Mammary epithelial cell (primary cell): ENCODE measurements at regions of chr4 and their contacts with region 1.

Region 1: DNA sequence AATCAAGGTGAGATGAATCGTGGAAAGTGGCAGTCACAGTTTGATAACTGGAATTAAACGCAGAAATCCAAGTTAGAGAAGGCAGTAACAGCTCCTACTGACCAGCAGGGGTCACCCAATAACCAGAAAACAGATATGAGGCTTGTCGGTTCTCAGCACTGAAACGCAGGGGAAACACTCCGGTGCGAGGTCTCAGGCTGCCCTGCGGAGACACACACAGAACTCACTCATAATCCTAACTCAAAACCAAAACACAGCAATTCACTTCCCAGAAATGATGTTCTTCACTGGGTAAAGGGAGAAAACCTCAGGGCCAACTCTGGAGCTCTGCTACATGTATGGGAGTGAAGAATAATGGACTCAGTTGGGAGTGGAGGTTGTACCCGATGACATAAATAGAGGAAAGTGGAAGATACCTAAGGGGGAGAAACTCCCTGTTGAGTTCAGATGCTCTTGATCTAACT is 384.4 kb downstream of the RAPGEF2 start:
- DNase-seq: peak; percentile 61
- H3K4me3 ChIP-seq: no peak overlapping the region
- H3K27ac ChIP-seq: no peak overlapping the region
- H3K4me1 ChIP-seq: no peaks in the 10 kb centered on the region
- H3K27me3 ChIP-seq: no peaks in the 10 kb centered on the region
- CTCF ChIP-seq: peak; percentile 80 to 82

Region 2: GRCh38 chr4:159655547-159655946 is 168.2 kb after region 1 on chr4:
- CTCF ChIA-PET with region 1: no interaction called
- dilution Hi-C with region 1: no loop called
- in situ Hi-C with region 1: no loop called
- intact Hi-C with region 1: loop called (anchors 5 kb)
- DNase-seq: peak; percentile 95
- H3K4me3 ChIP-seq: no peak overlapping the region
- H3K27ac ChIP-seq: peak overlapping the region; percentile 54
- H3K4me1 ChIP-seq: no peaks in the 10 kb centered on the region
- H3K27me3 ChIP-seq: no peaks in the 10 kb centered on the region
- CTCF ChIP-seq: no peak

Region 3: GRCh38 chr4:159764343-159764952 is 277.1 kb after region 1 on chr4:
- CTCF ChIA-PET with region 1: no interaction called
- dilution Hi-C with region 1: no loop called
- in situ Hi-C with region 1: no loop called
- intact Hi-C with region 1: loop called (anchors 1 kb)
- DNase-seq: peak; percentile 60
- H3K4me3 ChIP-seq: no peak overlapping the region
- H3K27ac ChIP-seq: no peak overlapping the region
- H3K4me1 ChIP-seq: no peaks in the 10 kb centered on the region
- H3K27me3 ChIP-seq: no peaks in the 10 kb centered on the region
- CTCF ChIP-seq: peak; percentile 53 to 59

Region 4: DNA sequence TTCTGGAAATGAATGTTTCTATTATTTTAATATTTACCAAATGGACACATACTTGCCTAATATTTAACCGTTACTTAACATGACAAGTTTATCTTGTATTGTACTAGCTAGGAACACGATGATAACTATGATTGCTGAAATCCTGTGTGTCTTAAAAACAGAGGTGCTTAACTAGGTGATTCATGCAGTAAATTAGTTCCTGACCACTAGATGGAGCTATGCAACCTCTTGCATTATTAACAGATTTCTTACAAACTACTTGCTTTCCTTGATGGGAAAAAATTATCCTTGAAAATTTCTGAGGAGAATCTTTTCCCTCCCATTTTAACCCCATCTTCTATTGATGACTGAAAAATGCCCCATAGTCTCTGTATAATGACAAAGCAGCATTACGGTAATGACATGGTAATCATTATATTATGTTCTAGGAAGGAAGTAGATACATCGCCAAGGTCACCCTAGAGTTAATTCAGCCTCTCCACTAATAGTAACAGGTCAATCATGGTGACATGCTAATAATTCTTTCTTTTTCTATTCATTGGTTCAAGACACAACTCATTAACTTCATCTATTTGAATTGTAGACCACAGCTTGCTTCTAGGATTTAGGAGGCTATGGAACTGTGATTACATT is 459.8 kb after region 1 on chr4:
- CTCF ChIA-PET with region 1: no interaction called
- dilution Hi-C with region 1: no loop called
- in situ Hi-C with region 1: no loop called
- intact Hi-C with region 1: loop called (anchors 1 kb)
- DNase-seq: peak; percentile 62
- H3K4me3 ChIP-seq: no peak overlapping the region
- H3K27ac ChIP-seq: no peak overlapping the region
- H3K4me1 ChIP-seq: no peaks in the 10 kb centered on the region
- H3K27me3 ChIP-seq: no peaks in the 10 kb centered on the region
- CTCF ChIP-seq: peak; percentile 75 to 79